ENCODE measurements at regions of chr5 and their contacts with region 1.

Region 1: GRCh38 chr5:170070556-170071412 is 34.9 kb upstream of the FOXI1 start:
- DNase-seq: no peak
- H3K4me3 ChIP-seq: no peak overlapping the region
- CTCF ChIP-seq: peak; percentile 79

Region 2: DNA sequence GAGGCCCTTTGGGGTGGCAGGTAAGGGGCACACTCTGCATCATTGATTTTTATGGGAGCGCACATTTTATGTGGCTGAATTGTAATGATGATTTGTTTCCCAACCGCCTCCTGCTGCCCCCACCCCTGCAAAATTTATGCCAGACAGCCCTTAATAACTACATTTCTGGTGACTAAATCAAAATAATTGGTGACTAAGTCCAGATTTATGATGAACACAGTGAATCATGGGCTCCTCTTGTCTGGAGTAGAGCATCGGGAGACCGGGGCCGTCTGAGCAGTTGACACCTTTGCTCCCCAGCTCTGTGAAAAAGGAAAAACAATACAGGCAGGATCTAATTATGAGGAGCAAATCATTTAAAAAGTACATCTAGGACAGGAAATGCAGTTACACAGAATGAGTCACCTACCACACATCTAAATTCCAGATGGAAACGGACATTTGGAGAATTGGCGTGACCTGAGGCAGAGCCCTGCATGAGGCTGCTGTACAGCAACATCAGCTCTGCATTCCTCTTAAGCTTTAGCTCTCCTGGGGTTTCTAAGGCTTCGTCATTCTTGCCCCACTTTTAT is 374.8 kb before region 1 on chr5:
- CTCF ChIA-PET with region 1: interaction called, 60 read pairs
- POLR2A ChIA-PET with region 1: no interaction called
- DNase-seq: peak; percentile 98
- H3K4me3 ChIP-seq: no peak overlapping the region
- CTCF ChIP-seq: no peak

Region 3: DNA sequence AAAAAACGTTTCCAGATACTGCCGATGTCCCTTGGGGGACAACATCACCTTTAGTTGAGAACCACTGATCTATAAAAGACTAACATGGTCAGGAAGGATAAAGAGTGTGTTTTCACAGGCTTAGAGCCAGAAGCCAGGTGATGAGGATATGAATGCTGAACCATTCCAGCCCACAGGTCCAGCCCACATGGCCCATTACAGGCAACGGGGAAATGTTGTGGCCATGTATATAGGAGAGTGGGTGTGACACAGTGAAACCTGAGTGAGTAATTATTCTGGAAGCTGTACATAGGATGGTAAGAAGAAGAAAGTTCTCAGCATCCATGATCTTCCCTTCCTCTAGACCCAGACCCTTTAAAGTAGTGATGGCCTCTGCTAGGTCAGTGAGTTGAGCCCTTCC is 21.1 kb before region 1 on chr5:
- CTCF ChIA-PET with region 1: interaction called, 14 read pairs
- POLR2A ChIA-PET with region 1: no interaction called
- DNase-seq: no peak
- H3K4me3 ChIP-seq: no peak overlapping the region
- CTCF ChIP-seq: no peak

Region 4: DNA sequence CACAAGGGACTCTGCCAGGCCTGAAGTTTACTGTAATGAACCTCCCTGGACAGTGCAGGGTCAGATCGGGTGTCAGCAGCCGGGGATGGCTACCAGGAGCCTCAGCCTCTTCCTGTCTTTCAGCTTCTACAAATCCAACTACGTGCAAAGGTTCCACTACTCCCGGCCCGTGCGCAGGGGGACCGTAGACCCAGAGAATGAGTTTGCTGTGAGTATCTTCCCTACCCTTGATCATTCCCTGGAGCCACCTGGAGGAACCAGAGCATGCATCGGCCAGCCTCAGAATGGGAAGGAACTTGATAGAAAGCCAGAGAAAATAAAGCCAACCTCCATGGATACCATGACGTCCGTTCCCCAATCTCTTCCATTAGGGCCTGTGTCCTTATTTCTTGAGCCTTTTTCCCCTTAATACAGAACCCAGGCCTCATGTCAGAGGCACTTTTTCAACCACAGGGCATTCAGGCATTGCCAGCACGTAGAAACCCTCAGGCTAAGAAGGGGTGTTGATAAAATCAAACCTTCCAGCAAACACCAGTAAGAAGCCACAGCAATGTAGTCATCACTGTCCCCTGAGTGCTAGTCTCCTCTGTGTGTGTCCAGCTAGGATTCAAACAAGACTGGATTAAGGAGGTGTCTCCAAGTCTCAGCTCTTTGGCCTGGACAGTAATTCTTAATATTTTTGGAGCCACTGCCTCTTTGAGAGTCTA is 14.1 kb before region 1 on chr5:
- CTCF ChIA-PET with region 1: interaction called, 54 read pairs
- POLR2A ChIA-PET with region 1: no interaction called
- DNase-seq: no peak
- H3K4me3 ChIP-seq: no peak overlapping the region
- CTCF ChIP-seq: no peak

Region 5: DNA sequence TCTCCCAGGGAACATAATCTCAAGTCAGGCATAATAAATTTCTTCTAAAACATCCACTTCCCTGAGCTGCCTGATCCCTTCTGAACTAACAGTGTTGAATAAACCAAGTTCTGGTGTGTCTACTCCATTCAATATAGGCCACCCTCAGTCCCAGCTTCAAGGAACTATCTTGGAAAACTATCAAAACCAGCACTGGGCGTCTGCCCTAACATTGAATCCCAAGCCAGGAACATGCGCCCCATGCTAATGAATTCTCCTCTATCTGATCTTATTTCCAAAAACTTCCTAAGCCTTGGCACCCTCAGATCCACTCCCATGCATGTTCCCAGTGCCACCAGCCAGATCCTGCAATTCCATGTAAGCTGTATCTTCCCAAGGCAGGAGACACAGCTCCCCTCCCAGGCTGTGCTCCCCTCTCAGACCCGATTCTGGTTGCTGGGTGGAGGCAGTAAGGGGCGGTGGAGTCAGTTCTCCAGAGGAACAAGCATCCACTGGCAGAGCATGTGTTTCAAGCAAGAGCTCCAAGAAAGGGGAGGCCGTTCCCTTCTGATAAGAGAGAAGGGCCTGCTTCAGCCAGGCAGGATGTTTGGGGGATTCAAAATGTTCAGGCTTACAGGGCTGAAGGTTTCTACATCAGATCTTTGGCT is 21.8 kb after region 1 on chr5:
- CTCF ChIA-PET with region 1: interaction called, 12 read pairs
- POLR2A ChIA-PET with region 1: no interaction called
- DNase-seq: no peak
- H3K4me3 ChIP-seq: no peak overlapping the region
- CTCF ChIP-seq: no peak

Region 6: GRCh38 chr5:170103447-170103846 is 32.7 kb after region 1 on chr5:
- CTCF ChIA-PET with region 1: no interaction called
- POLR2A ChIA-PET with region 1: no interaction called
- DNase-seq: no peak
- H3K4me3 ChIP-seq: no peak overlapping the region
- CTCF ChIP-seq: no peak

Region 7: DNA sequence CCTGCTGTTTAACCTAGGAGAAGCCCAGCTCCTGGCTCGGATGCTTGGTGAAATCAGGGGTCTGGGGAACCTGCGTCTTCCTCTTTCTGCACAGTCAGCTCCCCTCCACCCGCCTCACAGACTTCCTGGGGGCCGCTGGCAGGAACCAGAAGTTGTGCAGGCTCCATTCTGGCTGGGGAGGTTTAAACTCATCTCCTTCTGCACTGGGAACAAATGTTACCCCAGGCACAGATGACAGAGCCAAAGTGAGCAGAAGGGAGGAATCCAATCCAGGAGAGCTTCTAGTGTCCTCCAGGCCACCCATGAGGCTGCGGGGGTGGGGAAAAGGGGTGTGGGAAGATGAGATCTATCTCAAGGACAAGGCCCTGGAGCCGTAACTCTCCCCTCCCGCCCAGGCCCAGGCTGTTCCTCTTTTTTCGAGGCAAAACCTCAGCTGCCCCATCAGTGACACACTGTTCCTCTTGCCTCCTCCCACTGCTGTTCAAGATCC is 287.2 kb after region 1 on chr5:
- CTCF ChIA-PET with region 1: no interaction called
- POLR2A ChIA-PET with region 1: no interaction called
- DNase-seq: no peak
- H3K4me3 ChIP-seq: no peak overlapping the region
- CTCF ChIP-seq: no peak

Region 8: DNA sequence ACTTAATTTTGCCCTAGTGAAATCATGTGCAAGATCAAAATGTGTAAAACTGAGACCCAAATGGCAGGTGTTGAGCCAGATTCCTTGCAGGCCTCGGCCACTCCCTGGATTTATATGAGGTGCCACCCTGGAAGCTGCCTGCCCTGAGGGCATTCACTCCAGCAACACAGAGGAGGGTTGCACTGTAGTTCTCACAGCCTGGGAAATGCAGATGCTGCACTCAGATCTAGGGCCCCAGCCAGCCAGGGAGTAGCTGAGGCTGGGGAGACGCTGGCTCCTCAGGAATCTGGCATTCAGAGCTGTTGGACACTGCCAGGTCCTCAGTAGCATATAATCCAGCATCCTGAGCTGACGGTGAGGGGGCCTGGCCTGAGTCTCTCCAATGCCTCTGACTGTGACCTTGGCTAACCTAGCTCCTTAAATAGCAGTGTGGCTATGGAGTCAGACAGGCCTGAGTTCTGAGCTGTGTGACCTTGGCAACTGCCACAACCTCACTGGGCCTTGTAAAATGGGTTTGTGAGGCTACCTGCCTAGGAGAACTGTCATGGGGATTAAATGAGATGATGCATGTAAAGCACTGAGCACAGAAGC is 309.7 kb after region 1 on chr5:
- CTCF ChIA-PET with region 1: no interaction called
- POLR2A ChIA-PET with region 1: no interaction called
- DNase-seq: no peak
- H3K4me3 ChIP-seq: no peak overlapping the region
- CTCF ChIP-seq: no peak